Aorta (tissue), 5 donors: ENCODE measurements at regions of chr13 and their contacts with region 1.

Region 1: GRCh38 chr13:98445340-98446233 is 131.3 kb downstream of the STK24 start:
- DNase-seq: peak; percentile 76 to 91
- ATAC-seq: peak; percentile 87
- H3K4me3 ChIP-seq: no peak overlapping the region
- H3K27ac ChIP-seq: no peak overlapping the region
- H3K4me1 ChIP-seq: no peaks in the 10 kb centered on the region
- H3K27me3 ChIP-seq: no peaks in the 10 kb centered on the region

Region 2: GRCh38 chr13:98492335-98493041 is 46.9 kb after region 1 on chr13:
- intact Hi-C with region 1: no loop called
- DNase-seq: no peak
- ATAC-seq: no peak
- H3K4me3 ChIP-seq: no peak overlapping the region
- H3K27ac ChIP-seq: no peak overlapping the region
- H3K4me1 ChIP-seq: no peaks in the 10 kb centered on the region
- H3K27me3 ChIP-seq: no peaks in the 10 kb centered on the region

Region 3: DNA sequence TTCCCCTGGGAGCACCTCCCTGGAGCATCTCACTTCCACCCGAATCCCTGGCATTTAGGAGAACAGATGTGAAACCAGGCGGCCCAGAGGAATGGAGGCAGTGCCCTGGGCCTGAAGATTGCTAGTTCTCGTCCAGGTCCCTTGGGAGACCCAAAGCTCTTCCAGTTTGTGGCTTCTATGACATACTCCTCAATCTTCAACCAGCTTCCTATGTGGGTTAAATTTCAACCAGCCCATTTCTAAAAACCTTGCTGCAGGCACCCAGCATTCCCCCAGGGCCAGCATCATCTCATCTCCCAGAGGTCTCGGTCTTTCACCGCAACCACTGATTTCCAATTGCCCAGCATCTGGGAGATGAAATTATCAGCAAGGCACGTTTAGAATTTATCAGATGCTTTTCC is 177.3 kb after region 1 on chr13:
- intact Hi-C with region 1: no loop called
- DNase-seq: no peak
- ATAC-seq: no peak
- H3K4me3 ChIP-seq: no peak overlapping the region
- H3K27ac ChIP-seq: no peak overlapping the region
- H3K4me1 ChIP-seq: no peaks in the 10 kb centered on the region
- H3K27me3 ChIP-seq: no peaks in the 10 kb centered on the region

Region 4: GRCh38 chr13:98653463-98653985 is 207.9 kb after region 1 on chr13:
- intact Hi-C with region 1: loop called (anchors 1 to 5 kb)
- DNase-seq: peak; percentile 83 to 90
- ATAC-seq: peak; percentile 88
- H3K4me3 ChIP-seq: no peak overlapping the region
- H3K27ac ChIP-seq: no peak overlapping the region
- H3K4me1 ChIP-seq: no peaks in the 10 kb centered on the region
- H3K27me3 ChIP-seq: no peaks in the 10 kb centered on the region

Region 5: DNA sequence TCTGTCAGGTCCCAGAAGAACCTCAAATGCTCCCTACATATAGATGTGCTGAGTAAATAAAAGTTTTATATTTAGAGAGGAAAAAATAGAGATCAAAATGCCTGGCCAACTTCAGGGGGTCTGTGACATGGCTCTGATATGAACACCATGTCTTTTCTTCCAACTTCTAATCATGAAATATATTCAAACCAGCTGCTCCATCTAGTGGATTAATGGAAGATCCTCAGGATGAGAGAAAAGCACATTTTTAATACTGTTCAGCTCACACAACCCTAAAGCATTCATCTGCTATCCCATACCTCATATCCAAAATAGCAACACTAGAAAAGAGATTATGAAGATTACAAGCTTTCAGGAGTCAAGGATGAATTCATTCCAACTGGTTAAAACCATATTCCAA is 588.2 kb after region 1 on chr13:
- intact Hi-C with region 1: no loop called
- DNase-seq: no peak
- ATAC-seq: no peak
- H3K4me3 ChIP-seq: no peak overlapping the region
- H3K27ac ChIP-seq: no peak overlapping the region
- H3K4me1 ChIP-seq: no peaks in the 10 kb centered on the region
- H3K27me3 ChIP-seq: no peaks in the 10 kb centered on the region